Heart right ventricle (tissue), 16 donors: ENCODE measurements at regions of chr7 and their contacts with region 1.

Region 1: GRCh38 chr7:70325509-70326101 is 727.3 kb downstream of the AUTS2 start:
- DNase-seq: no peak
- ATAC-seq: peak in 1 of 8 donors; percentile 68
- H3K4me3 ChIP-seq: no peak overlapping the region
- H3K27ac ChIP-seq: no peak overlapping the region
- H3K4me1 ChIP-seq: peaks cover 0 to 4% (median 0%) of the 10 kb centered on the region in 9 donors
- H3K27me3 ChIP-seq: no peaks in the 10 kb centered on the region
- CTCF ChIP-seq: no peak

Region 2: DNA sequence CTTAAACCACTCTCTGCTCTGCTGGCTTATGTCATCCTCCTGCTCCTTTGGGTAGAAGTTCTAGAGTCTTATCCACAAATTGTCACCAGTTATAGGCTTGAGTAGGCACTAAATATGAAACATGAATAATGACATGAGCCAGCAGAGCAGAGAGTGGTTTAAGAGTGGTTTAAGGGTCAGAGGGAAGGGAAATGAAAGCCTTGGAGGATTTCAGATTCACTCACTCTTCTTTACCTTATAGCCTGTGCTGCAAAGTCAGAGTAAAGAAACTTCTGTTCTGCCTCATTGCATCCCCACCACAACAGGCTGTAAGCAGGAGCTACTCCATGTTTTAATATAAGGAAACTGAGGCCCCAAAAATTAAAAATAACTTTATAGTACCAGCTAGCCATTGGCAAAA is 22.3 kb after region 1 on chr7:
- intact Hi-C with region 1: loop called in 1 of 10 experiments (anchors 1 kb)
- DNase-seq: no peak
- ATAC-seq: no peak
- H3K4me3 ChIP-seq: no peak overlapping the region
- H3K27ac ChIP-seq: no peak overlapping the region
- H3K4me1 ChIP-seq: peaks cover 0 to 6% (median 0%) of the 10 kb centered on the region in 9 donors
- H3K27me3 ChIP-seq: no peaks in the 10 kb centered on the region
- CTCF ChIP-seq: no peak

Region 3: DNA sequence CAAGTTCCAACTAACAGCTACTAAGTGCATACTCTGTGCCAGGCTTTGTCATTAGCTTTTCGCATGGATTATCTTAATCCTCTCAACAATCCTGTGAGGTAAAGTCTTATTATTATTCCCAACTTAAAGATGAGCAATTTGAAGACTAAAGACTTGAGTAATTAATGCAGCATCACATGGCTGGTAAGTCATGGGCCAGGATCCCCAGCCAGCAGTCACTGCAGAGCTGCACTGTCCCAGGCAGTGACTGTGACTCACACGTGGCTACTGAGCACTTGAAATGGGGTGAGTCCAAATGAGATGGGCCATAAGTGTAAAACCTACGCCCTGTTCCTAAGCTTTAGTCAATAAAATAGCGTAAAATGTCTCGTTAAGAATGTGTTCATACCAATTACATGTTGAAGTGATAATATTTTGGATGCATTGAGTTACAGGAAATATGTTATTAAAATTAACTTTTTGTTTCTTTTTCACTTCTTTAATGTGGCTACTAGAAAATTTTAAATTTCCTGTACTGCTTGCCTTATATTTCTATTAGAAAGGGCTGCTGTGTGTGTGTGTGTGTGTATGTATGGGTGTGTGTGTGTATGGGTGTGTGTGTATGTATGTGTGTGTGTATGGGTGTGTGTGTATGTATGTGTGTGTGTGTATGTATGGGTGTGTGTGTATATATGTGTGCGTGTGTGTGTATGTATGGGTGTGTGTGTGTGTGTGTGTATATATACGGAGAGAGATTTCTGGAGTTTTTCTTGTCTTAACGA is 29.0 kb after region 1 on chr7:
- intact Hi-C with region 1: loop called in 1 of 10 experiments (anchors 1 kb)
- DNase-seq: no peak
- ATAC-seq: no peak
- H3K4me3 ChIP-seq: no peak overlapping the region
- H3K27ac ChIP-seq: no peak overlapping the region
- H3K4me1 ChIP-seq: peaks cover 0 to 6% (median 0%) of the 10 kb centered on the region in 9 donors
- H3K27me3 ChIP-seq: no peaks in the 10 kb centered on the region
- CTCF ChIP-seq: no peak

Region 4: GRCh38 chr7:70384891-70385290 is 59.3 kb after region 1 on chr7:
- intact Hi-C with region 1: no loop called
- DNase-seq: no peak
- ATAC-seq: no peak
- H3K4me3 ChIP-seq: no peak overlapping the region
- H3K27ac ChIP-seq: no peak overlapping the region
- H3K4me1 ChIP-seq: peaks cover 0 to 17% (median 4%) of the 10 kb centered on the region in 9 donors
- H3K27me3 ChIP-seq: no peaks in the 10 kb centered on the region
- CTCF ChIP-seq: no peak

Region 5: DNA sequence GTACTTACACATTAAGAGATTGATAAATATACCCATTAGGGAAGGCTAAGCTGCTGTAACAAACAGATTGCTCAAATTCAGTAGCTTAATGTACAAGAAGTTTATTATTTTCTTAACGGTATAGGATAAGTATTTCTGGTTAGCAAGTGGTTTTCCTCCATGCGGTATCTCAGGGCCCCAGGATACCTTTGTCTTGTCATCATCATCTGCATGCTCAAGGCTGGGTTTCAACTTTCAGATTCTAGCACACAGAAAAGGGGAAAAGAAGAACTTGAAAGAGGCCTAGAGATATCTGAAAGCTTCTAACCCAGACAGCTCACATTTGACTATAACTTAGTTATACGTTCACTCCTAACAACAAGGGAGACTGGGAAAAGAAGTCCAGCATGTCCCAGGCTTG is 794.5 kb after region 1 on chr7:
- intact Hi-C with region 1: no loop called
- DNase-seq: no peak
- ATAC-seq: no peak
- H3K4me3 ChIP-seq: no peak overlapping the region
- H3K27ac ChIP-seq: no peak overlapping the region
- H3K4me1 ChIP-seq: no peaks in the 10 kb centered on the region
- H3K27me3 ChIP-seq: no peaks in the 10 kb centered on the region
- CTCF ChIP-seq: no peak